SK-N-SH (cell line): ENCODE measurements at regions of chr6 and their contacts with region 1.

Region 1: GRCh38 chr6:167485186-167485978 is 160.5 kb downstream of the TTLL2 start:
- DNase-seq: peak; percentile 58
- H3K4me3 ChIP-seq: no peak overlapping the region
- H3K27ac ChIP-seq: no peak overlapping the region
- H3K4me1 ChIP-seq: no peaks in the 10 kb centered on the region
- H3K27me3 ChIP-seq: no peaks in the 10 kb centered on the region
- CTCF ChIP-seq: no peak
- EP300 ChIP-seq: no peak
- RAD21 ChIP-seq: peak; percentile 60

Region 2: DNA sequence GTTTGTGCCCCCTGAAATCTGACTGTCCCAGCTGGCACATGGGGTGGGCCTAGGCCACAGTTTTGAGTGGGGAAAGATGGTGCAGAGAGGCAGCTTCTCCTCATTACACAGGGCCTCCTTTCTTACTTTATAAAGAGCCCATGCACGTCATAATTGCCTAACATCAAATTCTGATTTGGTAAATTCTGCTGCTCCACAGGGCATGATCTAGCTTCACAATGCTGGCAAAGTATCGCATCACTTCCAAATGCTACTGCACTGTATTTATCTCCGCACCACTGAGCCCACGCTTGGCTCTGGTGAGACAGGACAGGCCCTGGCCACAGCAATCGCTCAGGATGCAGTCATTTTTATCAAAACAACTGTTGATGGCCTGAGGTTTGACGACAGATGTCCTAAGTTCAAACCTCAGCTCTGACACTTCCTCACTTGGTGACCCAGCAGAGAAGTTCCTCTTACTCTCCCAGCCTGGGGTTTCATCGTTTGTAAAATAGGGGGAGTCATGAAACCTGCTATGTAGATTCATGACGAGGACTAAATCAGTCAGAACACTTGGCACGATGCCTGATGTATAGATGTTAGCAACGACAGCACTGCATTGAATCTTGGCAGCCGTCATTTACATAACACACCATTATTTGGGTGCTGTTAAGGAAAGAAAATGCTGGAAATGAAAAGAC is 27.5 kb after region 1 on chr6:
- CTCF ChIA-PET with region 1: no interaction called
- POLR2A ChIA-PET with region 1: no interaction called
- DNase-seq: no peak
- H3K4me3 ChIP-seq: no peak overlapping the region
- H3K27ac ChIP-seq: no peak overlapping the region
- H3K4me1 ChIP-seq: no peaks in the 10 kb centered on the region
- H3K27me3 ChIP-seq: no peaks in the 10 kb centered on the region
- CTCF ChIP-seq: no peak
- EP300 ChIP-seq: no peak
- RAD21 ChIP-seq: no peak

Region 3: GRCh38 chr6:167898673-167899311 is 413.4 kb after region 1 on chr6:
- CTCF ChIA-PET with region 1: interaction called, 16 read pairs
- POLR2A ChIA-PET with region 1: no interaction called
- DNase-seq: peak; percentile 19
- H3K4me3 ChIP-seq: no peak overlapping the region; a peak in 1 of 4 replicates
- H3K27ac ChIP-seq: no peak overlapping the region
- H3K4me1 ChIP-seq: no peaks in the 10 kb centered on the region; a peak in 1 of 4 replicates
- H3K27me3 ChIP-seq: no peaks in the 10 kb centered on the region
- CTCF ChIP-seq: peak; percentile 91
- EP300 ChIP-seq: no peak
- RAD21 ChIP-seq: peak; percentile 87